ENCODE measurements at regions of chr3 and their contacts with region 1.

Region 1: DNA sequence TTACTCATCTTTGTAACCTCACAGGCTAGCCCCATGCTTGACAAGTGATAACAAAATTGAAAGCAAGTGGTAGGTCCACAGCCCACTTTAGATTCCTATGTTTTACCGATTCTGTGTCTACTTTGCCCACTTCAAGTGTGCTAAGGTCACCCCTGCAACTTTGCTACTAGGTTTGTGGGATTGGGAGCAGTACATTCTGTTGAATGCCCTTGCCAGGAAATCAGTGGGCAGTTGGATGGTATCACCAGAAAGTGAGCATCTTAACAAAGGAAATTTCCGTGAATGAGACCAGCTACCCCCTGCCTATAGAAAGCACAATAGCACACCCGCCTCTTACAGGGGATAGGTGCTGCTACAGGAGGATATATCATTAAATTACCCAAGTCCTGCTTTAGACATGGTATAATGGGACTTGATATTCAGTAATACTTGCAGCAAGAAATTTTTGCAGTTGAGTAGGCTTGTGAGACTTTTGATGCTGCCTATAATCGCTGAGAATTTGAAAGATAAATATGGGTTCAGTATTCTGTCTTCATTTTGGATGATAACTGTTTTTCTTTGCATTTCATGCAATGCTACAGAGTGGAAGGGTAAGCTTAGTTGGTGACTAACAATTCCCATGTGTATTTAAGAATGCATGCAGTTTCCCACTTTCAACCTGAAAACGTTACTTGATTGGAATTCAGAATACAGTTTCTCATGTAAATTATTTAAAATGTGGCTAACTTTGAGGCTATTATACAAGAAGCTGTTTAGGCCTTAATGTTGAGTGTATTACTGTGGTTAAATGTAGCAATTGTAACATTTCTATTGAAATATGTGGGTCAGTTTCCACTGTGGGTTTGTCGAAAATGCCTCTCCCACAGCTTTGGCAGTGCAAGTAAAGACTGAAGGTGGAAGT is 9.5 kb downstream of the EBLN2 start:
- DNase-seq: no peak
- H3K4me3 ChIP-seq: no peak overlapping the region
- H3K27ac ChIP-seq: peak overlapping the region; percentile 39
- H3K4me1 ChIP-seq: peaks cover 44% of the 10 kb centered on the region
- H3K27me3 ChIP-seq: no peaks in the 10 kb centered on the region
- CTCF ChIP-seq: no peak

Region 2: DNA sequence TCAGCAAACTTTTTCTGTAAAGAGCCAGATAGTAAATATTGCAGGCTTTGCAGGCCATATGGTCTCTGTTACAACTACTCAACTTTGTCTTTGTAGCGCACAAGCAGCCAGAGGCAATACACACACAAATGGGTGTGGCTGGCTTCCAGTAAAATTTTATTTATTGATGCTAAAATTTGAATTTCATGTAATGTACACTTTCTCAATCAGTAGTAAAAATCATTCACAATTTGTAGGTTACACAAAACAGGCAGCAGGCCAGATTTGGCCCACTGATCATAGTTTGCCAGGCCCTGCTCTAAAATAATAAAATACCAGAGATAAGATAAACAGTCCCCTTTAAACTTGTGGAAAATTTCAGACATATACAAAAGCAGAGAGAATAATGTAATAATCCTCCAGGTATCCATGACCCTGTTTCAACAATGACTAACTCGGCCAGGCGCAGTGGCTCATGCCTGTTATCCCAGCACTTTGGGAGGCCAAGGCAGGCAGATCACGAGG is 553.0 kb before region 1 on chr3:
- intact Hi-C with region 1: no loop called
- DNase-seq: no peak
- H3K4me3 ChIP-seq: no peak overlapping the region
- H3K27ac ChIP-seq: no peak overlapping the region
- H3K4me1 ChIP-seq: no peaks in the 10 kb centered on the region
- H3K27me3 ChIP-seq: no peaks in the 10 kb centered on the region
- CTCF ChIP-seq: no peak

Region 3: GRCh38 chr3:72618739-72619138 is 452.2 kb before region 1 on chr3:
- intact Hi-C with region 1: no loop called
- DNase-seq: no peak
- H3K4me3 ChIP-seq: no peak overlapping the region
- H3K27ac ChIP-seq: no peak overlapping the region
- H3K4me1 ChIP-seq: peaks cover 8% of the 10 kb centered on the region
- H3K27me3 ChIP-seq: no peaks in the 10 kb centered on the region
- CTCF ChIP-seq: no peak

Region 4: GRCh38 chr3:72938471-72939265 is 132.3 kb before region 1 on chr3:
- intact Hi-C with region 1: loop called (anchors 5 kb)
- DNase-seq: peak; percentile 20
- H3K4me3 ChIP-seq: peak overlapping the region; percentile 14
- H3K27ac ChIP-seq: peak overlapping the region; percentile 80
- H3K4me1 ChIP-seq: peaks cover 14% of the 10 kb centered on the region
- H3K27me3 ChIP-seq: no peaks in the 10 kb centered on the region
- CTCF ChIP-seq: peak; percentile 71

Region 5: GRCh38 chr3:72951259-72951722 is 119.6 kb before region 1 on chr3:
- intact Hi-C with region 1: loop called (anchors 5 kb)
- DNase-seq: no peak
- H3K4me3 ChIP-seq: no peak overlapping the region
- H3K27ac ChIP-seq: no peak overlapping the region
- H3K4me1 ChIP-seq: no peaks in the 10 kb centered on the region
- H3K27me3 ChIP-seq: no peaks in the 10 kb centered on the region
- CTCF ChIP-seq: no peak